Mammary epithelial cell (primary cell): ENCODE measurements at regions of chr7 and their contacts with region 1.

Region 1: GRCh38 chr7:130982160-130982638 is 248.2 kb upstream of the KLF14 start:
- DNase-seq: peak; percentile 59
- H3K4me3 ChIP-seq: no peak overlapping the region
- H3K27ac ChIP-seq: peak overlapping the region; percentile 13
- H3K4me1 ChIP-seq: peaks cover 10% of the 10 kb centered on the region
- H3K27me3 ChIP-seq: no peaks in the 10 kb centered on the region
- CTCF ChIP-seq: peak; percentile 87 to 90

Region 2: DNA sequence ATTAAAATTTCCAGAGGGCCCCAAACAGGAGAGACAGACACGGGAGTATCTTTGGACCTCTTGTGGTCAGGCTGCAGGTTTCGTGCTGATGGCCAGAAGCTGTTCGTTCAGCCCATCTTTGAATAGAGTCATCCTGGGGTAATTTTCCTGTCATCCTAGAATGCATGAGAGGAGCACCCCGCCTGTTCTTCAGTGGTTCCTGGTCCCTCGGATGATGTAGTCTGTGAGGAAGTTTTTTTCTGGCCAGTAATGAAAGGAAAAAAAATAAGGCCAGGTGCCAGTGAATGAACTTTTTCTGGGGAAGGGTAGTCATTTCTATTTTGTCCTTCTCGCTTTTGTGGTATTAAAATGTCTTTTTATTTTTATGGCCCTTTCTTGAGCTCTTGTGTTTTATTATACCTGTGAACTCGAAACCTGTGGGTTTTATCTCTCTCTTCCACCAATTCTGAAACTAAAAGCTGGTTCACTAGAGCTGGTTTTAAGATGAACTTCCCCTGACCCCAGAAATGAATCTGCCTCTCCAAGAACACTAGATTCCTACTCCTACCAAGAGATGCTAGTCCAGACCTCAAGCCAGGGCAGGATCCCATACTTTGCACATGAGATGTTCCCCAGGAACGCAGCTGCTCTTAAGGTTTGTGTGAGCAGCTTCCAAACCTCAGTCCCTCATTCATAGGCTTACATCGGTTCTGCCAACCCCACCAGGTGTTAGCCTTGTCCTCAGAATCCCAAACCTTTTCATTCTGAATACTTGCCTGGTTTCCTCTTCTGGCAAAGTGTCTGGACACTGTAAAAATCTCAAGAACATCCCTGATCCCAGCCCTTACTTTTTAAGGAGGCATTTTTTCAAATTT is 505.7 kb before region 1 on chr7:
- CTCF ChIA-PET with region 1: no interaction called
- dilution Hi-C with region 1: no loop called
- in situ Hi-C with region 1: no loop called
- intact Hi-C with region 1: no loop called
- DNase-seq: peak; percentile 57
- H3K4me3 ChIP-seq: no peak overlapping the region
- H3K27ac ChIP-seq: no peak overlapping the region
- H3K4me1 ChIP-seq: no peaks in the 10 kb centered on the region
- H3K27me3 ChIP-seq: no peaks in the 10 kb centered on the region
- CTCF ChIP-seq: no peak

Region 3: DNA sequence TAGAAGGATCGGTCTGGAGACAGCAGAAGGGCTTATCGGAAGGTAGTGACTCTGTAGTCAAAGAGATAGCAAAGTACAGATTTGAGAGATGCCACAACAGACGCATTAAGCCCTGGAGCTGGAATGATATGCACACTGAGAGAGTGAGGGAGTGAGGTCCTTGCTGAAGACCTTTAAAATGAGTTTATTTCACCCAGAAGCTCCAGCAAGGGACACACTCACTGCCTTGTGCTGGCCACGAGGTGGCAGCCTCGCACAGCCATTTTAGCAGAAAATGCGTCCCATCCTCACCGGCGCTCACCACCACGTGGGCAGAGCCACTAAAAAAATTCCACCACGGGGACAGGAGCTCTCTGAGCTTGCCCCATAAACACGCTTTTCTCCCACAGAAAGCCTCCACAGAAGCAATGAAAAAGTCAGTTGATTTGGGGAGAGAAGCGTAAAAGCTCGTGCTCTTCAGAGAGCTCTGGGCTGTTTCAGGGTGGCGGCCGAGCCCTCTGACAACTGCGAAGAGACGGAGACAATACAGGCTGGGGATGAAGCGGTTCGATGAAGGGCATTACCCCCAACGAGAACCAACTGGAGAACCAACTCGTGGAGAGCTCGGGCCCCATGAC is 85.2 kb before region 1 on chr7:
- CTCF ChIA-PET with region 1: interaction called, 4 read pairs
- dilution Hi-C with region 1: no loop called
- in situ Hi-C with region 1: no loop called
- intact Hi-C with region 1: loop called (anchors 1 kb)
- DNase-seq: no peak
- H3K4me3 ChIP-seq: no peak overlapping the region
- H3K27ac ChIP-seq: no peak overlapping the region
- H3K4me1 ChIP-seq: peaks cover 83% of the 10 kb centered on the region
- H3K27me3 ChIP-seq: no peaks in the 10 kb centered on the region
- CTCF ChIP-seq: peak; percentile 76 to 80

Region 4: GRCh38 chr7:130996841-130997231 is 14.6 kb after region 1 on chr7:
- CTCF ChIA-PET with region 1: interaction called, 3 read pairs
- dilution Hi-C with region 1: no loop called
- in situ Hi-C with region 1: no loop called
- intact Hi-C with region 1: loop called (anchors 2 kb)
- DNase-seq: peak; percentile 85
- H3K4me3 ChIP-seq: no peak overlapping the region
- H3K27ac ChIP-seq: peak overlapping the region; percentile 97
- H3K4me1 ChIP-seq: peaks cover 69% of the 10 kb centered on the region
- H3K27me3 ChIP-seq: no peaks in the 10 kb centered on the region
- CTCF ChIP-seq: no peak

Region 5: GRCh38 chr7:131007394-131008330 is 25.5 kb after region 1 on chr7:
- CTCF ChIA-PET with region 1: interaction called, 4 read pairs
- dilution Hi-C with region 1: no loop called
- in situ Hi-C with region 1: no loop called
- intact Hi-C with region 1: loop called (anchors 1 kb)
- DNase-seq: peak; percentile 73
- H3K4me3 ChIP-seq: no peak overlapping the region
- H3K27ac ChIP-seq: peak overlapping the region; percentile 66
- H3K4me1 ChIP-seq: peaks cover 36% of the 10 kb centered on the region
- H3K27me3 ChIP-seq: no peaks in the 10 kb centered on the region
- CTCF ChIP-seq: peak; percentile 37 to 67

Region 6: DNA sequence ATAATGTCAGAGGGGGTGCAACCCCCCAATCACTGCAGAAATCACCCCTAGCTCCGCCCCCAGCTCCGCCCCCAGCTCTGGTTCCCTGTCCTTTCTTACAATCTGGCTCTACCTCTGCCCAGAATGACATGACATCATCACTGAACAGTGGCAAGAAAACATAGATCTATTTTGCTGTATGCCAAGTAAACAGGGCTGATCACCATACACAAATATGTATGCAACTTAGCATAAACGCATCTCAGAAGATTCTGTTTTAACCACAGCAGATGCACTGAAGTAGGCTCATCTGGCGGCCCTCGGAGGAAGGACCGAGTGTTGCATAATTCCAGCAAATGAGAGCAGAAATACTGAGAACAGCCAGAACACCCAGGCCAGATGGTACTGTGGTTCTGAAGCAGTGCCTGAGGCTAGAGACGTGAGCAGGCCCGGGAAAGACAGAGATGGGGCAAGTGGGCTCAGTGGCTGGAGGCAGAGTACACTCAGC is 45.1 kb after region 1 on chr7:
- CTCF ChIA-PET with region 1: interaction called, 3 read pairs
- dilution Hi-C with region 1: no loop called
- in situ Hi-C with region 1: no loop called
- intact Hi-C with region 1: loop called (anchors 1 kb)
- DNase-seq: peak; percentile 63
- H3K4me3 ChIP-seq: no peak overlapping the region
- H3K27ac ChIP-seq: peak overlapping the region; percentile 89
- H3K4me1 ChIP-seq: peaks cover 20% of the 10 kb centered on the region
- H3K27me3 ChIP-seq: no peaks in the 10 kb centered on the region
- CTCF ChIP-seq: no peak

Region 7: DNA sequence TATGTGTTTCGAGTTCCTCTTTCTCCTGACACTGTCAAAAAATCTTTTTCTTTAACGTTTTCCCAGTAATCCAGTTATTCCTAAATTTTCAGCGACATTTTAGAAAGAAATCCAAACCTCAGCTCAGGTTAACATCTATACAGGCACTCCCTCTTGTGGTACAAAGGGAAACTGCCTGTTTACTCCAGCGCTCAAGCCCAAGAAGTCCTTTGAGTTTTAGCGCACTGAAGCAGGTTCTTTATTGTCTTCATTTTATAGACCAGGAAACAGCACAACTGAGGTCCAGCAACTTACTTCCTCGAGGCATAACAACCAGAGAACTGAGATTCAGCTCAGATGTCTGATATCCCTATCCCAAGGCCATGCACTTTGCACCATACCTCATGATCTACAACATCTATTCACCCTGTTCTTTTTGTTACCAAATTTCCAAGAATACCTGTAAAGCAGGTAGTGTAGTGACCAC is 58.3 kb after region 1 on chr7:
- CTCF ChIA-PET with region 1: interaction called, 8 read pairs
- dilution Hi-C with region 1: no loop called
- in situ Hi-C with region 1: no loop called
- intact Hi-C with region 1: loop called (anchors 1 kb)
- DNase-seq: peak; percentile 48
- H3K4me3 ChIP-seq: no peak overlapping the region
- H3K27ac ChIP-seq: peak overlapping the region; percentile 63
- H3K4me1 ChIP-seq: peaks cover 8% of the 10 kb centered on the region
- H3K27me3 ChIP-seq: no peaks in the 10 kb centered on the region
- CTCF ChIP-seq: peak; percentile 93 to 97